ENCODE measurements at regions of chr17 and their contacts with region 1.

Region 1: GRCh38 chr17:59342681-59343131 is 11.3 kb downstream of the YPEL2 start:
- DNase-seq: peak; percentile 62
- ATAC-seq: peak; percentile 96
- H3K4me3 Mint-ChIP-seq: no peak overlapping the region
- H3K27ac Mint-ChIP-seq: peak overlapping the region; percentile 73
- H3K4me1 Mint-ChIP-seq: peaks cover 52% of the 10 kb centered on the region
- H3K27me3 Mint-ChIP-seq: no peaks in the 10 kb centered on the region

Region 2: GRCh38 chr17:59435238-59435637 is 92.5 kb after region 1 on chr17:
- CTCF ChIA-PET with region 1: interaction called, 5 read pairs
- POLR2A ChIA-PET with region 1: no interaction called
- intact Hi-C with region 1: loop called in 1 of 2 experiments (anchors 1 kb)
- DNase-seq: no peak
- ATAC-seq: peak; percentile 89
- H3K4me3 Mint-ChIP-seq: peak overlapping the region; percentile 47
- H3K27ac Mint-ChIP-seq: peak overlapping the region; percentile 87
- H3K4me1 Mint-ChIP-seq: peaks cover 63% of the 10 kb centered on the region
- H3K27me3 Mint-ChIP-seq: peaks cover 7% of the 10 kb centered on the region

Region 3: DNA sequence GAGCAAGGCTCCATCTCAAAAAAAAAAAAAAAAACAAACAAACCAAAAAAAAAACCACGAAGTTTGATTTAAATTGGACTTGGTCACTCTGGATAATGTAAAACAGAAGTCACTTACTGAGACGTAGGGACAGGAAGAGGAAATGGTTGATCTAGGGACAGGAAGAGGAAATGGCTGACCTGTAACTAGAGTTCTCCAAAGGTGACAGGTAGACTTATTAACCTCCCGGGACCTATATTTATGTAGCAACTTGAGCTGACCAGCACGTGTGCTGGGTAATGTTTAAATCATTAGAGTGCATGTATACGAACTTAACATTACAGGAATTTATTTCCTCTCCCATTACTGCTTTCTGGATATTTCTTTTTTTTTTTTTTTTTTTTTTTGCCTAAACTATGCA is 141.2 kb after region 1 on chr17:
- CTCF ChIA-PET with region 1: no interaction called
- POLR2A ChIA-PET with region 1: interaction called, 11 read pairs
- intact Hi-C with region 1: no loop called
- DNase-seq: no peak
- ATAC-seq: no peak
- H3K4me3 Mint-ChIP-seq: no peak overlapping the region
- H3K27ac Mint-ChIP-seq: no peak overlapping the region
- H3K4me1 Mint-ChIP-seq: peaks cover 3% of the 10 kb centered on the region
- H3K27me3 Mint-ChIP-seq: peaks cover 5% of the 10 kb centered on the region